ENCODE measurements at regions of chr3 and their contacts with region 1.

Region 1: GRCh38 chr3:12948891-12949711 is 107.7 kb upstream of the RPL32 start:
- DNase-seq: no peak

Region 2: GRCh38 chr3:12884186-12884680 is 64.9 kb before region 1 on chr3:
- in situ Hi-C with region 1: loop called (anchors 10 kb)
- DNase-seq: peak; percentile 76

Region 3: DNA sequence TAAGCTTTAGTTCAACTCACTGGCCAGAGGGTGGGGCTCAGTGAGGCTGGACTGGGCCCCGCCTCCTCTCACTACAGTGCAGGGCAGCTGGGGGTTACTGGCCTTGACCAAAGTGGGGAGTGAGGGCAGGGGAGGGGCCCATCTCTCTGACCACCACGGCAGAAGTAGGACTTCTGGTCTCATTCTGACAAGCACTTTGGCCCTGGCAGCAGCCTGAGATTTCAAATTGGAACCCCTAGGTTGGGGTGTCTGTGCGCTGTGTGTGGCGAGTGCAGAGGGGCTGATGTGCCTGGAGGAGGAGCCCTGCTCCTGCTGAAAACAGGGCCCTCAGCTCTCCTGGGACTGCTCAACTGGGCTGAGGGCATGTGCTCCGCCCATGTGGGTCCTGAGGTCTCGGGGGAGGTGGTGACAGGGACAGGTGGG is 47.5 kb before region 1 on chr3:
- in situ Hi-C with region 1: no loop called
- DNase-seq: no peak